Activated CD4-positive, alpha-beta T cell treated with anti-CD3 and anti-CD28 coated beads for 36 hours (primary cell): ENCODE measurements at regions of chr16 and their contacts with region 1.

Region 1: GRCh38 chr16:82229796-82230619 is 60.0 kb upstream of the MPHOSPH6 start:
- DNase-seq: peak; percentile 82
- ATAC-seq: no peak
- H3K4me3 Mint-ChIP-seq: no peak overlapping the region
- H3K27ac Mint-ChIP-seq: no peak overlapping the region
- H3K4me1 Mint-ChIP-seq: no peaks in the 10 kb centered on the region
- H3K27me3 Mint-ChIP-seq: peaks cover 16% of the 10 kb centered on the region

Region 2: DNA sequence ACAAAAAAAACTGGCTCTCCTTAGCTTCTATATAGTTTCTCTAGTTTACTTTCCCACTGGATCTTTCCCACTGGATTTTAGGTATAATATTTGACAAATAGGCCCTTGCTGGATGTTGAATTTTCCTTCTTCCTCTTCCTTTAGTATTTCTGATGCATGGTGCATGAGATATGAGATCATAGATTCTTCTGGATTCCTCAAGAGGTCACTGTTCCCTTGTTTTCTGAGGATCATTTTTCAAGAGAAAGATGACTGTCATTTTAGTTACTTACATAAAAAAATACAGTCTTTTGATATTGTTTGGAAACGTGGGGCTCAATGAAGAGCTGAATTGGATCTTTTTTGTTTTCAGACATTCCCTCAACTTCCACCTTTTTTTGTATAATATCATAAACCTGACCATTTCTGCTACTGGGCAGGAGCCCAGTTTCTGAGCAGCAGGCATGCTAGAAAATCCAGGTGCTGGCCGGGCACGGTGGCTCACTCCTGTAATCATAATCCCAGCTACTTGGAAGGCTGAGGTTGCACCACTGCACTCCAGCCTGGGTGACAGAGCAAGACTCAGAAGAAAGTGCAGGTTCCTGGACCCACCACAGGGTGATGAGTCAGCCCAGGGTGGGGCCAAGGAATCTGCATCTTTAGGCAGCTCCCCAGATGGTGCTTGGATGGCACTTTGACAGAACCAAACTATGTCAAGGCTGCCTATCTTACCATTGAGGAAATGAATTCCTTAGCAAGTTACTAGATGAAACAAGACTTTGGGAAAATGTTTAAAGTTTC is 289.0 kb before region 1 on chr16:
- CTCF ChIA-PET with region 1: interaction called, 20 read pairs
- POLR2A ChIA-PET with region 1: no interaction called
- intact Hi-C with region 1: loop called (anchors 1 to 2 kb)
- DNase-seq: peak; percentile 29
- ATAC-seq: no peak
- H3K4me3 Mint-ChIP-seq: no peak overlapping the region
- H3K27ac Mint-ChIP-seq: no peak overlapping the region
- H3K4me1 Mint-ChIP-seq: no peaks in the 10 kb centered on the region
- H3K27me3 Mint-ChIP-seq: no peaks in the 10 kb centered on the region

Region 3: DNA sequence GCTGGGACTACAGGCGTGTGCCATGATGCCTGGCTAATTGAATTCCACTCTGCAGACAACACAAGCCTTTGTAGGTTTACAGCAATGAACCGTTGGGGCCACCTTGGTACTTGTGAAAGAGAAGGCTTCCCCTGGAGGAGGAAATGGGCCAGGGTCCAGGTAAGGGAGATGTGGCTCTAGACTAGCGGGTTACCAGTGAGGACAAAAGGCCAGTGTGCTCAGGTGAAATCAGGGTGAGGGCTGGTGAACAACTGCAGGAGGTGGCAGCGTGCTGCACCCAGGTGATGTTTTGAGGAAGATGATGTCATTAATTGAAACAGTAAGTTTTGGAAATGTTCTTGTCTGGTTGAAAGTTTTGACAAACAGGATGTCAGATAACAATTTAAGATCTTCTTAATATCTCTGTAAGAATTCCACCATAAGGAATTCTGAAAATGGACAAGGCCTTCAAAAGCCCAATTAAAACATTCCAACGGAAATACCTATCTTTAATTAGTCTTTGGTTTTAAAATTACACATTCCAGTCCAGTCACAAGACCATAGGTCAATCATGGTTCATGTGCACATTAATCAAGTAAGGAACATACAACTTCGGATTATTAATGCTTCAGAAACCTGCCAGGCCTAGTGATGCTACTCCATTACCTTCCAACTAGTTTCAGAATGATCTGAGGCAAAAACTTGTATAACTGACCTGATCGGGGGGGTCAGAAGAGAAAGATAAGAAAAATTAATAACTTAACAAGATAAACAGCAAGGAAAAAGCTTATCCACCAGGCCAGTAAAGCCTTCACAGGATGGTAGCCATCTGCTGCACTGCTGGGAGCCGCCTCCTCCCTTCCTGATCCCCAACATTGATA is 225.1 kb before region 1 on chr16:
- CTCF ChIA-PET with region 1: no interaction called
- POLR2A ChIA-PET with region 1: no interaction called
- intact Hi-C with region 1: no loop called
- DNase-seq: no peak
- ATAC-seq: no peak
- H3K4me3 Mint-ChIP-seq: no peak overlapping the region
- H3K27ac Mint-ChIP-seq: no peak overlapping the region
- H3K4me1 Mint-ChIP-seq: peaks cover 13% of the 10 kb centered on the region
- H3K27me3 Mint-ChIP-seq: no peaks in the 10 kb centered on the region

Region 4: GRCh38 chr16:82169861-82170845 is 59.9 kb before region 1 on chr16 and contains the start of gene MPHOSPH6:
- CTCF ChIA-PET with region 1: interaction called, 11 read pairs
- POLR2A ChIA-PET with region 1: interaction called, 3 read pairs
- intact Hi-C with region 1: loop called in 1 of 2 experiments (anchors 5 kb)
- DNase-seq: peak; percentile 95
- ATAC-seq: peak; percentile 94
- H3K4me3 Mint-ChIP-seq: peak within 1 kb of the TSS; percentile 96
- H3K27ac Mint-ChIP-seq: peak within 1 kb of the TSS; percentile 97
- H3K4me1 Mint-ChIP-seq: peaks cover 31% of the 10 kb centered on the region
- H3K27me3 Mint-ChIP-seq: peaks cover 25% of the 10 kb centered on the region
- total RNA-seq, gene MPHOSPH6: 48.0 to 48.7 TPM

Region 5: DNA sequence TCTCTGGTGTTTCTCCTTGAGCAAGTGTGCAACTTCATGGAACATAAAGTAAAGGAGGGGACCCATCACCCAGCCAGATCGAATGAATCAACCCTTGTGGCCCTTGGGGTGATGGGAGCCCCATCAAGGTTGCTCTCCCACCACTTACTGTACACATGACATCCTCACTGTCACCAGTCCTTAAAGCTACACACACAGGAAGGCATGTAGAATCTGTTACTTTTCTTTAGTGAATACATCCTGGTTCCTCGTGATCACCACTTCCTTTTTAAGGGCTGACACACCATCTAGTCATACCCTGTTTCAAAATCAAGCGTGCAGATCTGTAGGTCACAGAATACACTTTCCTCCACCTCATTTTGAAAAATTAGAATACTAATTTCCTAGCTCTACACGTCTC is 37.3 kb before region 1 on chr16:
- CTCF ChIA-PET with region 1: interaction called, 11 read pairs
- POLR2A ChIA-PET with region 1: no interaction called
- intact Hi-C with region 1: no loop called
- DNase-seq: peak; percentile 65
- ATAC-seq: peak; percentile 98
- H3K4me3 Mint-ChIP-seq: no peak overlapping the region
- H3K27ac Mint-ChIP-seq: peak overlapping the region; percentile 85
- H3K4me1 Mint-ChIP-seq: peaks cover 28% of the 10 kb centered on the region
- H3K27me3 Mint-ChIP-seq: peaks cover 14% of the 10 kb centered on the region

Region 6: GRCh38 chr16:82280867-82281266 is 50.9 kb after region 1 on chr16:
- CTCF ChIA-PET with region 1: no interaction called
- POLR2A ChIA-PET with region 1: no interaction called
- intact Hi-C with region 1: no loop called
- DNase-seq: no peak
- ATAC-seq: no peak
- H3K4me3 Mint-ChIP-seq: no peak overlapping the region
- H3K27ac Mint-ChIP-seq: no peak overlapping the region
- H3K4me1 Mint-ChIP-seq: no peaks in the 10 kb centered on the region
- H3K27me3 Mint-ChIP-seq: no peaks in the 10 kb centered on the region